Sciatic nerve (tissue), 2 donors: ENCODE measurements at regions of chr9 and their contacts with region 1.

Region 1: DNA sequence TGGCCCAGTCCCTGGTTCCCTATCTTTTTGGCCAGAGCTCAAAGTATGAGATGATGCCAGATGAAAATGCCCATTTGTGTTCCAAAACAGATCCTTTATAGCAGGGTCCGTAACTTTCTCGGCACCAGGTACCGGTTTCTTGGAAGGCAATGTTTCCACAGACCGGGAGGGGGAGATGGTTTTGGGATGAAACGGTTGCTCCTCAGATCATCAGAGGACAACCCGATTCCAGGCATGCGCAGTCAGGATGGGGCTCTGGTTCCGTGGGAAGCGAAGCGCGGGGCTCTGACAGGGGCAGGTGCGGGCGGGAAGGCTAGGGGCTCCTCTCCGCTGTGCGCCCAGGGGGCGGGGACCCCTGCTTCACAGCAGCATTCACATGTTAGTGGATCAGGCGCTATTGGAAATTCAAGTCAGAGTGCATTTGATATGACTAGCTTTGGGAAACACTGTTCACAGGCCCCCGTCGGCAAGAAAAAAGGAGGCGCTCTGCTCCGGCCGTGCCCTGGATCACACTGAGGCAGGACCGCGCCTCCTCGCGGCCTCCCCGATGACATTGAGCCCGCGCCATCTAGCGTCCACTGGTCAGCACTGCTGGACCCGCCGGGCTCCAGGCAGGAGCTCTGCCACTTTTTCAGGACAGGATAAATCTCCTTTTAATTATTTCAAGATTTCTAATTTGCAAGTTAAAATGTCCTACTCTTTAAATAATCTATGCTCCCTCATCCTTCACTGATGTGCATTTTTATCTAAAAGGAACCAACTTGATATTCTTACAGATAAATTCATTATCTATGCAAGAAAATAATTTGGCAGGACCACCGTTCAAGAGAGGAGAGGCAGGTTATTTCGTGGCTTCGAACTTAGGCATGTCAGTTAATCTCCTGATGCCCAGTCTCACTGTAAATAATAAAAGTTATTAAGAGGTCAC is 190.0 kb downstream of the FANCC start:
- DNase-seq: peak; percentile 94
- ATAC-seq: peak; percentile 90

Region 2: GRCh38 chr9:94681508-94681907 is 446.0 kb before region 1 on chr9:
- intact Hi-C with region 1: loop called (anchors 5 kb)
- DNase-seq: peak; percentile 86
- ATAC-seq: peak; percentile 97

Region 3: GRCh38 chr9:95078958-95079357 is 48.6 kb before region 1 on chr9:
- intact Hi-C with region 1: loop called (anchors 5 kb)
- DNase-seq: no peak
- ATAC-seq: no peak

Region 4: GRCh38 chr9:96383165-96383942 is 1255.8 kb after region 1 on chr9 and contains the start of gene SLC35D2:
- intact Hi-C with region 1: no loop called
- DNase-seq: peak; percentile 74
- ATAC-seq: peak; percentile 94
- total RNA-seq, gene SLC35D2: 30.3 TPM